ENCODE measurements at regions of chr16 and their contacts with region 1.

Region 1: DNA sequence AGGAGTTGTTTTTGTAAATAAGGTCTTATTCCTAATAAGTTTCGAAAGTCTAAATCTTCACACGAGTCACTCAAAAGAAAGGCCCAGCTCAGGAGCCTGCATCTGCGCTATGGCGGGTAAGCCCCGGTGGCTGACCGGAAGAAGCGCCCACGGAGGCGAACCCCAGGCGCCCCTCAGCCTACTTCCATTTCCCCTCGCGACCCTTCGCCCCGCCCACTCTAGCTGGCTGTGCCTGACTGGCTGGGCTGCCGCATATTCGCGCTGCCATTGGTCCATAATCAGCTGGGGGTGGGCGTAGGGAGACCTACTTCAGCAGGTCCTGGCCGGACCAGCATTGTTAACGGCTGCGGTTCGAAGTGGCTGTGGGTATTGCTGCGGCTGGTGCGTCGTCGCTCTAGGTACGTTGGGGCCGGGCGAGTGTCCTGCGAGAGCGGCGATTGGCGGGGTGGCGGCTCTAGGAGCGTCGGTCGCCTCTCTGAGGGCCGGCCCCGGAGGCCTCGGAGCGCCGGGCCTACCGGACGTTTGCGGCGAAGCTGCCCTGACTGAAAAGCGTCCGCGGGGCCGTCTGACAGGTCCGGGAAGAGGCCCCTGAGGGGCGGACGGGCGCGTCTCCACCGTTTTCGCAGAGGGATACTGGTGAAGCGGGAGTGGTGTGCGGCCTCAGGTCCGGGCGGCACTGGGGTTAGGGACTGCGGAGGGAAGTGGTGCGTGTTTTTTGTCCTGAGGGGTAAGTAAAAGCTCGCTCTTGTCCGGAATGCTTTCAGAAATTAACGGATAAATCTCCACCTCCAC is at the start of gene ATF7IP2:
- DNase-seq: peak; percentile 98
- ATAC-seq: peak; percentile 98
- H3K4me3 ChIP-seq: peak within 1 kb of the TSS; percentile 88 to 95 (median 91)
- H3K27ac ChIP-seq: peak within 1 kb of the TSS; percentile 76
- H3K4me1 ChIP-seq: peaks cover 58% of the 10 kb centered on the region
- H3K27me3 ChIP-seq: no peaks in the 10 kb centered on the region; a peak in 1 of 5 replicates
- CTCF ChIP-seq: peak; percentile 5; the same call in 1 of the 2 replicates
- EP300 ChIP-seq: peak; percentile 36 to 90; a peak in 3 of 4 replicates
- POLR2A ChIP-seq: peak; percentile 100
- RAD21 ChIP-seq: peak; percentile 82
- total RNA-seq, gene ATF7IP2: 98.1 and 117 TPM in 2 replicates

Region 2: DNA sequence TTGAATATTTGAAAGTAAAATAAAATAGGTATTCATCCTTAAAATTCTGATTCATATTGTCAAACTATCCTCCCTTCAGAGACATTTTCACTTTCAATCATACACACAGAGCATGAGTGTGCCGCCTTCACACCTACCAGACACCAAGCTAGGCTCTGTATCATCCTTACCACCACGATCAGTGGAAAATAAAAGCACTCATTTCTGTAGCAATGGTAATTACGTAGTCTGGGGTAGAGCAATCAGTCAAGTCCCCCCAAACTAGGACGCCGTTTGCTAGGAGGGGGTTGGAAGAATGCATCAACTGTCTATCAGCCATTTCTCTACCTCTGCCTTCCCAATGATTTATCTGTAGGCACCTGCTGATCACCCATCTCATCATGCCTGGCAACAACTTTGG is 119.1 kb before region 1 on chr16:
- CTCF ChIA-PET with region 1: no interaction called
- POLR2A ChIA-PET with region 1: interaction called, 12 read pairs
- in situ Hi-C with region 1: no loop called
- intact Hi-C with region 1: no loop called
- DNase-seq: no peak
- ATAC-seq: no peak
- H3K4me3 ChIP-seq: no peak overlapping the region
- H3K27ac ChIP-seq: peak overlapping the region; percentile 88
- H3K4me1 ChIP-seq: peaks cover 78% of the 10 kb centered on the region
- H3K27me3 ChIP-seq: no peaks in the 10 kb centered on the region
- CTCF ChIP-seq: no peak
- EP300 ChIP-seq: no peak
- POLR2A ChIP-seq: no peak
- RAD21 ChIP-seq: no peak

Region 3: GRCh38 chr16:10322723-10323527 is 63.0 kb before region 1 on chr16:
- CTCF ChIA-PET with region 1: no interaction called
- POLR2A ChIA-PET with region 1: interaction called, 12 read pairs
- in situ Hi-C with region 1: no loop called
- intact Hi-C with region 1: loop called (anchors 2 kb)
- DNase-seq: peak; percentile 95
- ATAC-seq: peak; percentile 79
- H3K4me3 ChIP-seq: peak overlapping the region; percentile 1 to 37 (median 25); a peak in 4 of 6 replicates
- H3K27ac ChIP-seq: peak overlapping the region; percentile 73
- H3K4me1 ChIP-seq: peaks cover 63% of the 10 kb centered on the region
- H3K27me3 ChIP-seq: no peaks in the 10 kb centered on the region
- CTCF ChIP-seq: no peak
- EP300 ChIP-seq: peak in 1 of 2 experiments; percentile 89; a peak in 2 of 4 replicates
- POLR2A ChIP-seq: no peak
- RAD21 ChIP-seq: no peak

Region 4: GRCh38 chr16:10368969-10369551 is 16.9 kb before region 1 on chr16:
- CTCF ChIA-PET with region 1: no interaction called
- POLR2A ChIA-PET with region 1: interaction called, 37 read pairs
- in situ Hi-C with region 1: no loop called
- intact Hi-C with region 1: no loop called
- DNase-seq: peak; percentile 47
- ATAC-seq: peak; percentile 39; the same call in 2 of the 3 replicates
- H3K4me3 ChIP-seq: no peak overlapping the region
- H3K27ac ChIP-seq: no peak overlapping the region
- H3K4me1 ChIP-seq: peaks cover 55% of the 10 kb centered on the region
- H3K27me3 ChIP-seq: no peaks in the 10 kb centered on the region
- CTCF ChIP-seq: peak; percentile 54
- EP300 ChIP-seq: no peak
- POLR2A ChIP-seq: no peak
- RAD21 ChIP-seq: peak; percentile 21; the same call in 1 of the 2 replicates

Region 5: GRCh38 chr16:10428433-10429168 is 42.7 kb after region 1 on chr16:
- CTCF ChIA-PET with region 1: no interaction called
- POLR2A ChIA-PET with region 1: no interaction called
- in situ Hi-C with region 1: no loop called
- intact Hi-C with region 1: no loop called
- DNase-seq: no peak
- ATAC-seq: no peak
- H3K4me3 ChIP-seq: no peak overlapping the region
- H3K27ac ChIP-seq: no peak overlapping the region
- H3K4me1 ChIP-seq: 0 out of 2 replicates have a peak, but pooled peaks cover 6% of the 10 kb centered on the region
- H3K27me3 ChIP-seq: no peaks in the 10 kb centered on the region
- CTCF ChIP-seq: no peak
- EP300 ChIP-seq: no peak
- POLR2A ChIP-seq: no peak
- RAD21 ChIP-seq: no peak

Region 6: GRCh38 chr16:10743610-10744393 is 357.9 kb after region 1 on chr16 and contains the start of gene NUBP1:
- CTCF ChIA-PET with region 1: no interaction called
- POLR2A ChIA-PET with region 1: interaction called, 10 read pairs
- in situ Hi-C with region 1: no loop called
- intact Hi-C with region 1: loop called (anchors 10 kb)
- DNase-seq: peak; percentile 98
- ATAC-seq: peak; percentile 96
- H3K4me3 ChIP-seq: peak within 1 kb of the TSS; percentile 71 to 77 (median 74)
- H3K27ac ChIP-seq: peak within 1 kb of the TSS; percentile 94
- H3K4me1 ChIP-seq: peaks cover 31% of the 10 kb centered on the region
- H3K27me3 ChIP-seq: no peaks in the 10 kb centered on the region; a peak in 1 of 5 replicates
- CTCF ChIP-seq: peak; percentile 33
- EP300 ChIP-seq: peak in 1 of 2 experiments; percentile 61; a peak in 2 of 4 replicates
- POLR2A ChIP-seq: peak; percentile 90 to 97
- RAD21 ChIP-seq: peak; percentile 73; the same call in 1 of the 2 replicates
- total RNA-seq, gene NUBP1: 70.4 and 85.8 TPM in 2 replicates

Measured in HepG2 (cell line).